ENCODE measurements at regions of chr17 and their contacts with region 1.

Region 1: DNA sequence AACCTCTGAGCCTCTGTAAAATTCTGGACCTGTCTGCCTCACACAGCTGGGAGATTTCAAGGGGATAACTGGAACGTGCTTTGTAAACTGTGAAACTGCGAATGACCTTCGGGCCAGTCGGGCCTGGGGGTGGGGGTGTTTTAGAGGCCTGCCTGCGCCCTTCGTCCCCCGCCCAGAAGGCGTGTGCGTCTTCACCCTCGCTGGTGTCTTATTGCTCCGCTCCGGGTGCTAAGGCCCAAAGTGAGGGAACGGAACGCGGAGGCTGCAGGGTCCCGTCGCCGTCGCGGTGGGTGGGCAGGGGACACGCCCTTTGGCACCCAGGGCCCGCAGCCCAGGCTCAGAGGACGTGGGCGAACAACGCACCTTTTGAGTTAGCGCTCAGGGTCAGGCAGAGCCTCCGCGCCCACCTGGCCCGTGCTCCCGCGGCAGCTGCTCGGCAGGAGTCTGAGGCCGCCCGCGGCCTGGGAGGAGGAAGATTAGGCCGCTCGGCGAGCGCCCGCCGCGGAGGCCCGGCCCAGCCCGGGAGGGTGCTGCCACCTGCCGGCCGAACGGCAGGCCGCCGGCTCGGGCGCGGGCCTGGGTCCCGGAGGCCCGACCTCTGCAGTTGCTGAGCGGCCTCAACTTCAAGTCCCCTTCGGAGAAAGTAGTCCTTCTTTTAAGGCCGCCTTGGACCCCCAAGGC is 29.7 kb downstream of the DCAKD start:
- DNase-seq: peak; percentile 56
- H3K4me3 Mint-ChIP-seq: no peak overlapping the region
- H3K27ac Mint-ChIP-seq: no peak overlapping the region
- H3K4me1 Mint-ChIP-seq: peaks cover 18% of the 10 kb centered on the region
- H3K27me3 Mint-ChIP-seq: no peaks in the 10 kb centered on the region
- CTCF ChIP-seq: peak; percentile 80

Region 2: DNA sequence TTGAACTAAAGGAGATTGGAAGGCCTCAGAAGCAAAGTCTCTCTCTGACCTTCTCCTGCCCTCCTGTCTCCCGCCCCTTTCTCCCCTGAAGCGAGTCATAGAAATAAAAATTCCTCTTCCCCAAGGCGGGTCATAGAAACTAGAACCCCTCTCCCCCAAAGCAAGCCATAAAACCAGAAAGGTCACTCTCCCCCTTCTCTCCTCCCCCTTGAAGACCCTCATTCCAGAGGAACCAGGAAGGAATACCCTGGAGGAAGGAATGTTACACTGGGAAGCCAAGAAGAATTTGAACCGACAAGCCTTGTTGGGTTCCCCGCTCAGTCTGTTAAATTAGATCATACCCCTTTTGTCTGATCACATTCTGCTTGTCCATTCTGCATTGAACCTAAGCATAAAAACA is 188.9 kb before region 1 on chr17:
- CTCF ChIA-PET with region 1: no interaction called
- POLR2A ChIA-PET with region 1: no interaction called
- intact Hi-C with region 1: no loop called
- DNase-seq: no peak
- H3K4me3 Mint-ChIP-seq: no peak overlapping the region
- H3K27ac Mint-ChIP-seq: no peak overlapping the region
- H3K4me1 Mint-ChIP-seq: peaks cover 11% of the 10 kb centered on the region
- H3K27me3 Mint-ChIP-seq: no peaks in the 10 kb centered on the region
- CTCF ChIP-seq: no peak

Region 3: DNA sequence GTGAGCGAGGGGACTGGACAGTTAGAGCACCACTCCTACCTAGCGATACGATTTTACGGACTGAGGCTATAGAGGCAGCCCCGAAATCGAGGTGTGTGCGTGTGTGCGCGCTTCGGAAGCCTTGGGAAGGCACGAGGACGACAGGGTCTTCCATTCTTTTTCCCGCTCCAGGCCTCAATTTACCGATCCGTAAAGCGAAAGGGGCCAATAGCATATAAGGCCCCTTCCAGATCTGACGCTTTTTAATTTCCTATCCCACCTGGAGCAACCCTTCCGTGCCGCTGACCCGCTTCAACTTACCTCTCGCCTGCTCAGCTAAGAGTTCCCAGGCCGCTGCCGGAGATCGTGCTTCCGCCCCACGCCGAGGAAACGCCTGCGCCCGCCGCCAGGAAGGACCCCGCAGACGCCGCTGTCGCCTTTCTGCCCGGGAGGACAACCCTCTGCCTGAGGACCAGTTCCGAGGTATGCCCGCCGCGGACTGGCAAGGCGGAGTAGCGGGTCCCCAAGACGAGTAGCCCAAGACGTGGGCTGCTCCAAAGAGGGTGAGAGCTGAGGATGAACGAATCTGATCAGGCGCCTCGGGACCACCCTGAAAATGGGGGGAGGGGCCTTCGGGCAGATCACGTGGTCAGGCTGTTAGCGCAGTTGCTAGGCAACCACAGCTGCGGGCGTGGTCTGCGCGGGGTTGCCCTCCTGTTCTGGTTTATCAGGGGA is 122.5 kb before region 1 on chr17 and contains the start of gene EFTUD2:
- CTCF ChIA-PET with region 1: interaction called, 12 read pairs
- POLR2A ChIA-PET with region 1: interaction called, 6 read pairs
- intact Hi-C with region 1: no loop called
- DNase-seq: peak; percentile 87
- H3K4me3 Mint-ChIP-seq: peak within 1 kb of the TSS; percentile 80
- H3K27ac Mint-ChIP-seq: peak within 1 kb of the TSS; percentile 99
- H3K4me1 Mint-ChIP-seq: peaks cover 21% of the 10 kb centered on the region
- H3K27me3 Mint-ChIP-seq: no peaks in the 10 kb centered on the region
- CTCF ChIP-seq: no peak
- total RNA-seq, gene EFTUD2: 119 and 125 TPM in 2 replicates

Region 4: GRCh38 chr17:44911133-44912001 is 110.4 kb before region 1 on chr17:
- CTCF ChIA-PET with region 1: interaction called, 211 read pairs
- POLR2A ChIA-PET with region 1: interaction called, 3 read pairs
- intact Hi-C with region 1: no loop called
- DNase-seq: peak; percentile 36
- H3K4me3 Mint-ChIP-seq: no peak overlapping the region
- H3K27ac Mint-ChIP-seq: no peak overlapping the region
- H3K4me1 Mint-ChIP-seq: peaks cover 24% of the 10 kb centered on the region
- H3K27me3 Mint-ChIP-seq: no peaks in the 10 kb centered on the region
- CTCF ChIP-seq: no peak

Region 5: DNA sequence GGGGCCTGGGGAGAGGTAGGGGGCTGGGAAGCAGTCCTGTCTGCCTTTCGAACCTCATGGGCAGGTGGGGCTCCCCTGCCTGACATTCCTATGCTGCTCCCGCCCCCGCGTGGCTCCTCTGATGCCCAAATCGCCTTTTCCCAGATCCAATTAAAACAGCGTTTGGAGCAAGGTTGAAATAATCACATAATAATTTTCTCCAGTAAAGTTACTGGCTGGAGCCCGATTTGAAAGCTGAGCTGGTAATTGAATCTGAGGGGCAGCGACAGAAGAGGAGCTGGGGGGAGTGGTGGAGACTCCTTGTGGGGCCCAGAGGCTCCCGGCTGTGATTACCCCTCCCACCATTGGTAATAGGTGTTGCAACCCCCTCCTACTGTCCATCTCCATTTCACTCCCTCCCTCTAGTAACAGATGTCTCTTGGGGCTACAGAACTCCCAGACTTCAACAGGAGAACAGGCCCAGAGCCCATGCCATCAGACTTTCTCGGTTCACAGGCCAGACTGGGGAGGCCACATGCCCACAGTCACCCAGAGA is 14.8 kb before region 1 on chr17:
- CTCF ChIA-PET with region 1: interaction called, 13 read pairs
- POLR2A ChIA-PET with region 1: interaction called, 5 read pairs
- intact Hi-C with region 1: no loop called
- DNase-seq: peak; percentile 27
- H3K4me3 Mint-ChIP-seq: no peak overlapping the region
- H3K27ac Mint-ChIP-seq: no peak overlapping the region
- H3K4me1 Mint-ChIP-seq: no peaks in the 10 kb centered on the region
- H3K27me3 Mint-ChIP-seq: no peaks in the 10 kb centered on the region
- CTCF ChIP-seq: peak; percentile 5

Region 6: DNA sequence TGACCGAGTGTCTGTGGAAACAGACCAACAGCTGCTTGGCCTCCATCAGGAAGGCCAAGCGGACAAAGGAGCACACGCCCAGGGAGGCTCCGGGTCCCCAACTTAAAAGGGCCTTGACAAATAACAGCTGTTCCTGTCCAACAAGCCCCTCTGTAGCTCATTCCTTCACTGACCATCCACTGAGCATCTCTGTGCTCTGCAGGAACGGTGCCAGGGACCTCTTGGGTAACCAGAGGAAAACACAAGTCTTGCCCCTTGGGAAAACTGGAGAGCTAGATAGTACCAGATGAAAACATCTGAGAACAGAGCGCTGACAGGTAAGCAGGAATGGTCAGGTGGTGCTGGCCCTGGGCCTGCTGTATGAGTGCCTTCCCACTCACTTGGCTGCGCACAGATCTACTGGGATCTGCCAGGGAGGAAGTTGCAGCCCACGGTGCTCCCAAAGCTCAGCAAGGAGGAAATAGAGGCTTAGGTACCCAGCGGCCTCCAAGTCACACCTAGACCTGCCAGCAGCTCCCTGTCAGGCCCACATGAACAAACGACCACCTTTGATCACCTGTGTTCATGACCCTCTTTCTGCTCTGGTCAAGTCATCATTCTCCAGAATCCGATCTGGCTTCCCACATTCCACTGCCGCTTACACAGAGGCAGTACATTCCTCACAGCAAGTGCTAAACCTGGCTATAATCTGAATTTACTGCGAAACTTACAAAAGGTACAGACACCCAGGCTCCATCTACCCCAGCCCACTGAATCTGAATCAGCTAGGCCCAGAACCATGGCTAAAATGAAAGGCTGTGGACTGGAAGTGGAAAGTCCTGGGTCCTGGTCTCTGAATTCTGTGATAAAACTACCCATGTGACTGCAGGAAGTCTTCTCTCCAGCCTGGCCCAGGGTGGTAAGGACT is 17.2 kb after region 1 on chr17:
- CTCF ChIA-PET with region 1: interaction called, 22 read pairs
- POLR2A ChIA-PET with region 1: interaction called, 5 read pairs
- intact Hi-C with region 1: no loop called
- DNase-seq: no peak
- H3K4me3 Mint-ChIP-seq: no peak overlapping the region
- H3K27ac Mint-ChIP-seq: no peak overlapping the region
- H3K4me1 Mint-ChIP-seq: peaks cover 18% of the 10 kb centered on the region
- H3K27me3 Mint-ChIP-seq: no peaks in the 10 kb centered on the region
- CTCF ChIP-seq: no peak

Region 7: DNA sequence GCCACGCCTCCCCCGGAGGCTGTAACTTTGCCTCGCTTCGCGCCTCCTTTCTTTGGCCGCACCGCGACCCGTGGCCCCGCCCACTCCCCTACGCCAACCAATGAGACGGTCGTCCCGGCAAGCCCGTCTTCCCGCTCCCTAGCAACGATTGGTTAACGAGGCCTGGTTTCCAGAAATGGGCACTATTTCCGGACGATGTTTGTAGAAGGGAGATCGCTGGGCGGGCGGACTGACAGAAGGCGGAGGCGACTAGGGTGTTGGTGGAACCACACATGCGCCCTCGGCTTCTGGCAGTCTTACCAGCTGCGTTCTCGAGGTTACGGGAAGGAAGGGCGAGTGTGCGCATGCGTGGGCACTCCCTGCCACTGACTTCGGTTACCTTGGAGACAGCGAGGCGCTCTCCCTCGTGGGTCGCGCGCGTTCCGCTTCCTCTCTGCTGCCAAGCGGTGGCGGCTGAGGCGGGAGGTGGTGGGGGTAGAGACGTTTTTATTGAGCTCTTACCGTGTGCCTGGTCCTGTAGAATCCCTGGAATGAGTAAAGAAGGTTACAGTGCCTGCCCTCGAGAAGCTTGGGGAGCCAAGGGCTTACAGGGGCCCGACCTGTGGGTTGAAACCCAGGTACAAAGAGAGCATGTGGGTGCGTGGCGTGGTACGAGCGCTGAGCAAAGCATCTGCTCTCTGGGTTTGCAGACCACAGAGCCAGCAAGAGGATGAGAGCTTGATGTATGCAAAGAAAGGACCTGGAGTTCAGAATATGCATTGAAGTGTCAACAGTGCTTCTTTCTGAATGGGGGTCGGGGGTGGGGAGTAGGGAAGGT is 295.6 kb after region 1 on chr17:
- CTCF ChIA-PET with region 1: no interaction called
- POLR2A ChIA-PET with region 1: no interaction called
- intact Hi-C with region 1: no loop called
- DNase-seq: peak; percentile 100
- H3K4me3 Mint-ChIP-seq: peak overlapping the region; percentile 86
- H3K27ac Mint-ChIP-seq: peak overlapping the region; percentile 98
- H3K4me1 Mint-ChIP-seq: peaks cover 71% of the 10 kb centered on the region
- H3K27me3 Mint-ChIP-seq: no peaks in the 10 kb centered on the region
- CTCF ChIP-seq: no peak

Measured in MCF 10A (cell line).